ENCODE measurements at regions of chr11 and their contacts with region 1.

Region 1: GRCh38 chr11:31397239-31397834 is 27.7 kb downstream of the DNAJC24 start:
- DNase-seq: no peak
- ATAC-seq: peak in 1 of 2 donors; percentile 30
- H3K4me3 ChIP-seq: no peak overlapping the region
- H3K27ac ChIP-seq: no peak overlapping the region
- H3K4me1 ChIP-seq: no peaks in the 10 kb centered on the region
- H3K27me3 ChIP-seq: no peaks in the 10 kb centered on the region
- CTCF ChIP-seq: peak in 3 of 5 experiments; percentile 47 to 55 (median 52)
- POLR2A ChIP-seq: no peak

Region 2: GRCh38 chr11:31865606-31866300 is 468.4 kb after region 1 on chr11:
- in situ Hi-C with region 1: loop called in 1 of 4 experiments (anchors 10 kb)
- intact Hi-C with region 1: loop called (anchors 5 kb)
- DNase-seq: no peak
- ATAC-seq: no peak
- H3K4me3 ChIP-seq: no peak overlapping the region
- H3K27ac ChIP-seq: no peak overlapping the region
- H3K4me1 ChIP-seq: no peaks in the 10 kb centered on the region
- H3K27me3 ChIP-seq: no peaks in the 10 kb centered on the region
- CTCF ChIP-seq: no peak
- POLR2A ChIP-seq: no peak

Region 3: GRCh38 chr11:31870609-31871309 is 473.4 kb after region 1 on chr11:
- in situ Hi-C with region 1: loop called in 1 of 4 experiments (anchors 10 kb)
- intact Hi-C with region 1: loop called (anchors 5 kb)
- DNase-seq: peak; percentile 5 to 14
- ATAC-seq: no peak
- H3K4me3 ChIP-seq: no peak overlapping the region
- H3K27ac ChIP-seq: no peak overlapping the region
- H3K4me1 ChIP-seq: no peaks in the 10 kb centered on the region
- H3K27me3 ChIP-seq: peaks cover 0 to 3% (median 0%) of the 10 kb centered on the region in 3 donors
- CTCF ChIP-seq: peak; percentile 23 to 60 (median 43)
- POLR2A ChIP-seq: no peak

Measured in gastrocnemius medialis (tissue), 4 donors.